BJ (cell line): ENCODE measurements at regions of chr3 and their contacts with region 1.

Region 1: DNA sequence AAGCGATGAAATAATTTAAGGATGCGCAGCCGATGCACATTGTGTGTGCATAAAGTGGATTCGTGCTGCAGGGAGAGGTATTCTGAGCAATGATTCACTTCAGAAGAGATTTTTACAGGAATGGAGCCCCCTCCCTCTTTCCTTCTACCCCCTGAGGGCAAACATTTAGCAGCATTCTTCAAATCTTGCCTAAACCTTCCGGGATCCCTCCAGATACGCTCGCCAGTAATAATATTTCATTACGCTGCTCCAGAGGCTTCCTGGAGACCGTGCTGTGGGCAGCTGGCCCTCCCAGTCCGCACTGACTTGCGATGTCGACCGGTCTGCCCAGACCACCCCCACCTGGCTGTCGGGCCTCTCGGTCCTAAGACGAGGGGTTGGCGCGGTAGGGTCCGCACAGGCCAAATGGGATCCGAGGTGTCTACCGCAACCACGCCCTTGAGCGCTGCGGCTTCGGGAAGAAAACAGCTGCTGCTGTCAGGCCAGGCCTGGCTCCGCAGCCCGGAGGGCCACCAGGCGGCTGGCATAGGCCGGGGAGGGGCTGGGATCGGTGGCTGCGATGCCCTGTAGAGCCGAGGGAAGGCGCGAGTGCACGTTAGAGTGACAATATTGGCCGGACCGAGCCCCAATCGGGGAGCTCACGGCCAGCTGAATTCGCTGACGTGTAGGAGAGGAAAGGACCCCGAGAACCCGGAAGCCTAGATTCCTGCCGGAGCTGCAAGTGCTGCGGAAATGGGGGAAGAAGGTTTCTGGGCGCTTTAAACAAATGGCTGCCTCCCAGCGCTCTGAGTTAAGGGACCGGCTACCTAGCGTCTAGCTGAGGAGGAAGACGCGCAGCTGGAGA is 14.3 kb downstream of the ZIC4 start:
- DNase-seq: peak; percentile 37
- H3K4me3 ChIP-seq: peak overlapping the region; percentile 29
- H3K27me3 ChIP-seq: peaks cover 16% of the 10 kb centered on the region
- CTCF ChIP-seq: peak; percentile 62

Region 2: GRCh38 chr3:146747928-146748327 is 644.1 kb before region 1 on chr3:
- CTCF ChIA-PET with region 1: interaction called, 11 read pairs
- POLR2A ChIA-PET with region 1: no interaction called
- DNase-seq: peak; percentile 7
- H3K4me3 ChIP-seq: no peak overlapping the region
- H3K27me3 ChIP-seq: no peaks in the 10 kb centered on the region
- CTCF ChIP-seq: peak; percentile 60

Region 3: GRCh38 chr3:147409143-147410115 is 17.4 kb after region 1 on chr3 and contains the start of gene ZIC1:
- CTCF ChIA-PET with region 1: interaction called, 4 read pairs
- POLR2A ChIA-PET with region 1: interaction called, 29 read pairs
- DNase-seq: peak; percentile 26
- H3K4me3 ChIP-seq: peak within 1 kb of the TSS; percentile 60
- H3K27me3 ChIP-seq: peaks cover 20% of the 10 kb centered on the region
- CTCF ChIP-seq: no peak
- polyA plus RNA-seq, gene ZIC1: 19.5 and 28.5 TPM in 2 replicates